ENCODE measurements at regions of chr19 and their contacts with region 1.

Region 1: GRCh38 chr19:41439441-41440222 is at the start of gene DMAC2:
- DNase-seq: peak; percentile 97 to 98
- ATAC-seq: peak; percentile 99
- H3K4me3 ChIP-seq: peak within 1 kb of the TSS; percentile 71 to 84 (median 82)
- H3K27ac ChIP-seq: peak within 1 kb of the TSS; percentile 91 to 95 (median 93)
- H3K4me1 ChIP-seq: peaks cover 9 to 13% of the 10 kb centered on the region in 2 donors
- H3K27me3 ChIP-seq: no peaks in the 10 kb centered on the region
- CTCF ChIP-seq: peak; percentile 29 to 66 (median 38)
- POLR2A ChIP-seq: peak; percentile 65 to 74
- total RNA-seq, gene DMAC2: 41.0 to 61.0 (median 49.8) TPM

Region 2: DNA sequence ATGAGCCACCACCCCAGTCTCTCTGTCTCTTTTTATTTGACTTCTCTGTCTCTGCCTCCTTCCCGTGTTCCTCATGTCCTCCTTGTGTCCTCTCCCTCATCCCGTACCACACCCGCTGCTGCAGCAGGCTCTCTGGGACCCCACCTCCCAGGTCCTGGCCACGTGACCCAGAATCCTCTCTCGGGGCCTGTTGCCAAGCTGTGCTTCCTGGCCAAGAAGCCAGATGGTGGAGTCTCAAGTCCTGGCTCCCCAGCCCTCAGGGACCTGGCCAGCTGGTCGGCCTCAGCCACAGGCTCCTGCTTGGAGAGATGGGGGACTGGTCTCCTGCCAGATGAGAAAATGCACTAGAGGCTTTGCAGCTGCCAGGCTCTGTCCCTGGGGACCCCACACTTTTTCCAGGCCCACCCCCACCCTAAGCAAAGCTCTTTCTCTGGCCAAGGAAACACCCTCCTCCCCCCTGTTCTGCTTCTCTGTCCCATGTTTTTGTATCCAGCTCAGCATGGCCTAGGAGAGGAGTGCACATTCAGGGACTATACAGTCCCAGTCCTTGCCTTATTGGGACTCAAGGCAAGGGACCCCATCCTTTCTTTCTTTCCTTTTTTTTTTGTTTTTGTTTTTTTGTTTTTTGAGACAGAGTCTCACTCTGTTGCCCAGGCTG is 897.3 kb before region 1 on chr19:
- in situ Hi-C with region 1: no loop called
- intact Hi-C with region 1: no loop called
- DNase-seq: peak in 1 of 2 donors; percentile 33
- ATAC-seq: peak; percentile 49 to 50
- H3K4me3 ChIP-seq: no peak overlapping the region
- H3K27ac ChIP-seq: no peak overlapping the region
- H3K4me1 ChIP-seq: peaks cover 0 to 6% of the 10 kb centered on the region in 2 donors
- H3K27me3 ChIP-seq: no peaks in the 10 kb centered on the region
- CTCF ChIP-seq: no peak
- POLR2A ChIP-seq: no peak

Region 3: DNA sequence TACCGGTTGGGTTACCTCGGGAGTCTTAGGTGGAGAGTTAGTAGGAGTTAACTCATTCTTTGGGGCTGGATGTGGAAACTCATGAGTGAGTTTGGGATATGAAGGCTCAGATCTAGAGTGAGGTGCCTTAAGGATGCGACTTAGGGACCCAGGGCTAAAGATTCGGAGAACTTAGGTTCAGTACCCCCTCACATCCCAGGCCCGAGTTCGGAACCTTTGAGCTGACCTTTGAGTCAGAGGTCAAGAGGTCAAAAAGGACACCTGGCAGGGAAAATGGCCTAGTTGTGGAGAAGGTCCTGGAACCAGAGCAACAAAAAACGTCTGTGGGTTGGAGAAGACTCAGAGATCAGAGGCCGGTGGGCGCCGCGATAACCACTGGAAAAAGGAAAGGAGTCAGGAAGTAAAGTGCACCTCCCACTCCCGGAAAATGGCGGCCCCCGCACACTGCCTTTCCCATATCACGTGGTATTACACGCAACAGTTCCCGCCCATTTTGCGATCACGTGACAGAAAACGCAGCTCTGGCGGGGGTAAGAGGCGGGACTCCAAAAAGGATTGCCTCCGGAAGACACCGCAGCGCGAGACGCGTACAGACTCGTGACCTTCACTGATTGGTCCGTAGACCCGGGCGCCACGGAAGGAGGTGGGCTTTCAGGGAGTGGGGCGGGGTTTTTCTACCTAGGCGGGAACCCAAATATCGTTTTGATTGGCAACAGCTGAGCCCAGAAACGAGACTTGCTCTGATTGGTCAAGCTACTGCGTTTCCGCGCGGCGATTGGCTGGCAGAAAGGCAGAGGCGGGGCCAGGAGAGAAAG is 689.4 kb before region 1 on chr19 and contains the start of gene ACTMAP:
- in situ Hi-C with region 1: no loop called
- intact Hi-C with region 1: loop called (anchors 5 kb)
- DNase-seq: peak; percentile 100
- ATAC-seq: peak; percentile 91 to 93
- H3K4me3 ChIP-seq: peak within 1 kb of the TSS; percentile 73 to 93 (median 84)
- H3K27ac ChIP-seq: peak within 1 kb of the TSS; percentile 92 to 98 (median 94)
- H3K4me1 ChIP-seq: peaks cover 35 to 38% of the 10 kb centered on the region in 2 donors
- H3K27me3 ChIP-seq: no peaks in the 10 kb centered on the region
- CTCF ChIP-seq: peak in 2 of 5 experiments; percentile 51 to 67
- POLR2A ChIP-seq: peak; percentile 82 to 92
- total RNA-seq, gene ACTMAP: 4.2 to 14.6 (median 6.2) TPM

Region 4: GRCh38 chr19:41327576-41328156 is 112.0 kb before region 1 on chr19:
- in situ Hi-C with region 1: no loop called
- intact Hi-C with region 1: loop called (anchors 2 kb)
- DNase-seq: peak; percentile 38 to 76
- ATAC-seq: peak; percentile 12 to 38
- H3K4me3 ChIP-seq: peak overlapping the region; percentile 2 to 49 (median 23)
- H3K27ac ChIP-seq: peak overlapping the region; percentile 37 to 77 (median 68)
- H3K4me1 ChIP-seq: peaks cover 25 to 48% of the 10 kb centered on the region in 2 donors
- H3K27me3 ChIP-seq: no peaks in the 10 kb centered on the region
- CTCF ChIP-seq: no peak
- POLR2A ChIP-seq: no peak

Region 5: DNA sequence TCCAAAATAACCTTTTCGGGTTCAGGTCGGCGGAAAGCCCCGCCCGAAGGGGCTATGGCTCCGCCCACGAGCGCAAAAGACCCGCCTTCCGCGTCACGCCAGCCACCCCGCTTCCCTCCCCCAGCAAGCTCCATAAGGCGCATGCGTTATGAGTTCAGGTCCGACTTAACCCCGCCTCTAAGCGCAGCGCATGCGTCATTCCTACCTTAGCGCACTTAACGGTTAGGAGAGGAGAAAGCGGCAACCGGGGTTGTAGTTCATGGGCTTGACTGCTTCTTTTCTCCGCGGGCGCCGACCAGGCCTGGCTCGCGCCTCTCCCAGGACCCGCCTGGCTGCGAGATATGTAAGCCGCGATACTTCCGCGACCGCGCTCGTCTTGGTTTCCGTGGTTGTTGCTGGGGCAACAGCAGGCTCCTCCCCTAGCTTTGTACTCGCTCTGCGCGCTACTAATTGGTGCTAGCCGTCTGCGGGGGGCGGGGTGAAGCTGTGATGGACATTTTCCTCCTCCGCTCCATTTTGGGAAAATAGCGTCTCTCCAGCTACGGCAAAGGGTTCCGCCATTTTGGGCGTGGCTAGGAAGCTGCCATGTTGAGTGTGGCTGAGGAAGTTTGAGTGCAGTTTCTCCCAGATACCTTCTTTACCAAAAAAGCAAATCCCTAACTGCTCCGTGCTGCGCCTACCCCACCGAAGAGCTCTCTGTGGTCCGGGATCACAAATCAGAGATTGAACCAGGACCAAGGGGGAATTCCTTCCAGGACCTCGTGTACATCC is 75.7 kb before region 1 on chr19 and contains the start of gene B9D2:
- in situ Hi-C with region 1: no loop called
- intact Hi-C with region 1: loop called (anchors 1 kb)
- DNase-seq: peak; percentile 97 to 98
- ATAC-seq: peak; percentile 98 to 99
- H3K4me3 ChIP-seq: peak within 1 kb of the TSS; percentile 66 to 97 (median 86)
- H3K27ac ChIP-seq: peak within 1 kb of the TSS; percentile 94 to 100 (median 98)
- H3K4me1 ChIP-seq: peaks cover 3 to 6% of the 10 kb centered on the region in 2 donors
- H3K27me3 ChIP-seq: no peaks in the 10 kb centered on the region
- CTCF ChIP-seq: no peak
- POLR2A ChIP-seq: peak in 1 of 2 donors; percentile 49
- total RNA-seq, gene B9D2: 2.6 to 6.9 (median 4.5) TPM

Region 6: GRCh38 chr19:41397086-41398049 is 42.3 kb before region 1 on chr19 and contains the starts of genes BCKDHA and EXOSC5:
- in situ Hi-C with region 1: no loop called
- intact Hi-C with region 1: loop called (anchors 1 kb)
- DNase-seq: peak; percentile 99 to 100
- ATAC-seq: peak; percentile 98 to 99
- H3K4me3 ChIP-seq: peak within 1 kb of the TSS; percentile 89 to 95 (median 92)
- H3K27ac ChIP-seq: peak within 1 kb of the TSS; percentile 90 to 97 (median 94)
- H3K4me1 ChIP-seq: peaks cover 23 to 25% of the 10 kb centered on the region in 2 donors
- H3K27me3 ChIP-seq: no peaks in the 10 kb centered on the region
- CTCF ChIP-seq: peak in 1 of 5 experiments; percentile 12
- POLR2A ChIP-seq: peak; percentile 50 to 67
- total RNA-seq, gene BCKDHA: 80.8 to 115 (median 84.1) TPM
- total RNA-seq, gene EXOSC5: 29.1 to 61.9 (median 40.9) TPM

Region 7: DNA sequence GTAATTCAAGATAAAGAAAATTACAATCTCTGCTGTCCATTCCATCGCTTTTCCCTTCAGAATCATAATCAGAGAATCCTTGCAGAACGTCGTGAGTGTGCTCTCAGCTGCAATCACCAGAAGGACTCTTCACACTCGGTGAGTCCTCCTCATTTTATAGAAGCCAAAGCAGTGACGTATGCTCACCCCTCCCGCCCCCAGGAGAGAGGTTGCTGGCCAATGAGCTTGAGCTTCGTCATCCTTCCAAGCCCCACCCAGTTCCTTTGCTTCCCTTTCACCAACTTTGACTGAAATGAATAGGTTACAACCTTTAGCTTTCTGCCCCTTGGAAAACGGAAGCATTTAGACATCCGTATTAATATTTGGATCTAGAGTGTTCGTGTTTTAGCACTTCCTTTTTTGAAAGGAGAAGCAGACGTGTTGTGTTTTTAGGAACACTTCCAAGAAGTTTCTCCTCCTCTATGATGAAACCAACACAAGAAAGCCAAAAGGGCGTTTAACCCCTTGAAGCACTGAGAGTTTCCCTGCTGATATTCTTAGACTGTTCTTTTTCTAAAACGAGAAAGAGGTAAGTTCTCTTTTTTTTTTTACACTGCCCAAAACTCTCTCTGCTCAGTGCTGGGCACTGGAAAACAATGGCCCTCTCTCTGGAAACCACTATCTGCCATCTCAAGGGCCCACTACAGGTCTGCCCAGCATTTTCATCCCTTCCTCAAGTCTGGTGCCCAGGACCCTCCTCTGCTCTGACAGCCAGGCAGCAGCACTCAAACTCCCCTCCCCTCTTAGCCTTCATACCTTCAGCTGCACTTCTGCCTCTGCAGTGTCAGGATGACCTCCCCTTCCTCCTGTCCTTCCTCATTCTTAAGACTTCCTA is 92.0 kb after region 1 on chr19:
- in situ Hi-C with region 1: no loop called
- intact Hi-C with region 1: loop called (anchors 10 kb)
- DNase-seq: peak; percentile 56 to 69
- ATAC-seq: peak; percentile 84 to 88
- H3K4me3 ChIP-seq: peak overlapping the region; percentile 6 to 40 (median 20)
- H3K27ac ChIP-seq: peak overlapping the region; percentile 61 to 77 (median 70)
- H3K4me1 ChIP-seq: peaks cover 0 to 16% of the 10 kb centered on the region in 2 donors
- H3K27me3 ChIP-seq: no peaks in the 10 kb centered on the region
- CTCF ChIP-seq: no peak
- POLR2A ChIP-seq: peak; percentile 69 to 92

Region 8: DNA sequence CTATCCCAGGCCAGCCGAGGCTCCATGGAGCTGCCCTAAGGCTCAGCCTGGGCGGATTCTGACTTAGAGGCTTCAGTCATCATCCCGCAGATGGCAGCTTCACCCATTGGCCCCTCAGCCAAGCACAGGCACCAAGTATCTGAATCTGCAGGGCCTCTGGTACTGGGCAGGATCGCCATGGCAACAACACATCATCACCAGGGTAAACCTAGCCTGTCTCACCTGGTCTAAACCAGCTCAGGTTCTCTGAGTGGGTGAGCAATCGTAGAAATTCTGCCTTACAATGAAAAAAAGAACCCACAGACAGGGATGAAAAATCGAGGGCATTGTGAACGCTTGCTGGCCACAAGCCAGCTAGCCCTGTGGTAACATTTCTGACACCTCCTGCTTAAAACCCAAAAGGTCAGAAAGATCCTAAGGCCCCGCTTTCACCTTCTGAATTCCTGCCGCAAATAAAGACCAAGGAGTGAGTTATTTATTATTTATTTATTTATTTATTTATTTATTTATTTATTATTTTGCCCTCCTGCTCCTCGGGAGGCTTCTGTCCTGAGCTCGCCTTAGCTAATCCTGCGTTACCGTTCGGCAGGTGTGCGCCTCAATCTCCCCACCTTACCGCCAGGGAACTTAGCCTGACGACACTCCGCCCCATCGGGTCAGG is 124.4 kb after region 1 on chr19:
- in situ Hi-C with region 1: loop called in 1 of 4 experiments (anchors 10 kb)
- intact Hi-C with region 1: no loop called
- DNase-seq: no peak
- ATAC-seq: no peak
- H3K4me3 ChIP-seq: no peak overlapping the region
- H3K27ac ChIP-seq: no peak overlapping the region
- H3K4me1 ChIP-seq: no peaks in the 10 kb centered on the region
- H3K27me3 ChIP-seq: peaks cover 18 to 37% (median 20%) of the 10 kb centered on the region in 3 donors
- CTCF ChIP-seq: no peak
- POLR2A ChIP-seq: no peak